ENCODE measurements at regions of chr4 and their contacts with region 1.

Region 1: DNA sequence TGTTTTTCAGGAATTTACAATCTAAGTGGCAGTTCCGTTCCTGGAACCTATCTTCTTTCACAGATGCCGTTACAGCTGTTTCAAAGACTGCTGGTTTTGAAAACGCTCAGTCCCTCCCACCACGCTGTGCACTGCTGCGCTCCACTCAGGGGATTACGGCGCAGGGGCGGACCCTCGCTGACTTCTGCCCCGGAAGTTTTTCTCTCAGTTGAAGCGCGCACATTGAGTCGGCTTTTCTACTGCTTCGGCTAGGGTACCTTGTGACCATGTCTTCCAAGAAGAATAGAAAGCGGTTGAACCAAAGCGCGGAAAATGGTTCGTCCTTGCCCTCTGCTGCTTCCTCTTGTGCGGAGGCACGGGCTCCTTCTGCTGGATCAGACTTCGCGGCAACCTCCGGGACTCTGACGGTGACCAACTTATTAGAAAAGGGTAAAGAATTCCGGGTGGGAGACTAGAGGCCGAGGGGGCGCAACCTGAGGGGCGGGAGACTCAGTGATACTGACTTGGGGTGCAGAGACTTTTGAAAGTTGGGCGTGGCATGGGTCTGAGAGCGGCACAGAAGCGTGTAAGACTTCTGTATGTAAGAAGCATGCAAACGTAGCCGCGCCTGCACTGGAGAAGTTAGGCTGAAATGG is 597 bp upstream of the NUDT6 start:
- DNase-seq: peak; percentile 80 to 81
- H3K4me3 ChIP-seq: peak overlapping the region; percentile 66
- H3K4me3 Mint-ChIP-seq: no peak overlapping the region
- H3K27ac Mint-ChIP-seq: peak overlapping the region; percentile 79
- H3K4me1 ChIP-seq: no peaks in the 10 kb centered on the region
- H3K4me1 Mint-ChIP-seq: no peaks in the 10 kb centered on the region
- H3K27me3 ChIP-seq: no peaks in the 10 kb centered on the region
- H3K27me3 Mint-ChIP-seq: no peaks in the 10 kb centered on the region
- CTCF ChIP-seq: no peak

Region 2: GRCh38 chr4:122218762-122219161 is 704.2 kb before region 1 on chr4:
- CTCF ChIA-PET with region 1: no interaction called
- POLR2A ChIA-PET with region 1: no interaction called
- intact Hi-C with region 1: no loop called
- DNase-seq: peak in 1 of 2 experiments; percentile 2
- H3K4me3 ChIP-seq: no peak overlapping the region
- H3K4me3 Mint-ChIP-seq: no peak overlapping the region
- H3K27ac Mint-ChIP-seq: no peak overlapping the region
- H3K4me1 ChIP-seq: no peaks in the 10 kb centered on the region
- H3K4me1 Mint-ChIP-seq: peaks cover 6% of the 10 kb centered on the region
- H3K27me3 ChIP-seq: no peaks in the 10 kb centered on the region
- H3K27me3 Mint-ChIP-seq: no peaks in the 10 kb centered on the region
- CTCF ChIP-seq: peak in 1 of 2 experiments; percentile 19

Region 3: GRCh38 chr4:122827879-122828601 is 95.0 kb before region 1 on chr4:
- CTCF ChIA-PET with region 1: interaction called, 3 read pairs
- POLR2A ChIA-PET with region 1: no interaction called
- intact Hi-C with region 1: loop called (anchors 5 kb)
- DNase-seq: peak in 1 of 2 experiments; percentile 39
- H3K4me3 ChIP-seq: peak overlapping the region; percentile 45
- H3K4me3 Mint-ChIP-seq: peak overlapping the region; percentile 77
- H3K27ac Mint-ChIP-seq: peak overlapping the region; percentile 36
- H3K4me1 ChIP-seq: no peaks in the 10 kb centered on the region
- H3K4me1 Mint-ChIP-seq: no peaks in the 10 kb centered on the region
- H3K27me3 ChIP-seq: no peaks in the 10 kb centered on the region
- H3K27me3 Mint-ChIP-seq: peaks cover 5% of the 10 kb centered on the region
- CTCF ChIP-seq: peak in 1 of 2 experiments; percentile 11

Measured in Caco-2 (cell line).